ENCODE measurements at regions of chr9 and their contacts with region 1.

Region 1: DNA sequence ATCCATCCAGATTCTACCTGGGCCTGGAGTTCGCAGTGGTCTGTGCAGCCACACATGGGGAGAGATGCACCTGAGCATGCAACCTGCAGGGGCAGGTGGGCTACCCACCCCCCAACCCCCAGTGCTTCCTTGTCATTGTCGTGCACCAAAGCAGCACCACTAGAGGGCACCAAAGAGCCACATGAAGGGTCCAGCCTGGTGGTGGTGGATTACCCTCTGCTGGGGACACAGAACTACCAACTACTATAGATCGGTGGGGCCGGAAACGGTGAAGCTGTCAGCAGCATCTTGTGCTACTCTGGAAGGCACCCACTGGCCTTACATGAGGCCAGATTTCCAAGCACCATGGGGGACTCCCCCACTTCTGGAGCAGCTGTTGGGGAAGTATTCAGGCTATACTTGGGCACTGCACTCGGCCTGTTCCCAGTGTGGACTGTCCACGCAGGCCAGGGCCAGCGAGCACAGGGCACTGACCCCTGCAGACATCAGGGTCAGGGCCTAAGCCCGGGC is 60.2 kb upstream of the TBC1D2 start:
- H3K4me3 Mint-ChIP-seq: no peak overlapping the region
- H3K27ac Mint-ChIP-seq: no peak overlapping the region
- H3K4me1 Mint-ChIP-seq: peaks cover 18% of the 10 kb centered on the region
- H3K27me3 Mint-ChIP-seq: peaks cover 3% of the 10 kb centered on the region

Region 2: GRCh38 chr9:98775831-98776441 is 460.3 kb after region 1 on chr9:
- intact Hi-C with region 1: loop called (anchors 2 kb)
- H3K4me3 Mint-ChIP-seq: no peak overlapping the region
- H3K27ac Mint-ChIP-seq: no peak overlapping the region
- H3K4me1 Mint-ChIP-seq: no peaks in the 10 kb centered on the region
- H3K27me3 Mint-ChIP-seq: no peaks in the 10 kb centered on the region

Region 3: GRCh38 chr9:98791147-98792095 is 475.8 kb after region 1 on chr9:
- intact Hi-C with region 1: loop called (anchors 1 kb)
- H3K4me3 Mint-ChIP-seq: no peak overlapping the region
- H3K27ac Mint-ChIP-seq: no peak overlapping the region
- H3K4me1 Mint-ChIP-seq: peaks cover 14% of the 10 kb centered on the region
- H3K27me3 Mint-ChIP-seq: peaks cover 21% of the 10 kb centered on the region